AG04449 (cell line): ENCODE measurements at regions of chr15 and their contacts with region 1.

Region 1: DNA sequence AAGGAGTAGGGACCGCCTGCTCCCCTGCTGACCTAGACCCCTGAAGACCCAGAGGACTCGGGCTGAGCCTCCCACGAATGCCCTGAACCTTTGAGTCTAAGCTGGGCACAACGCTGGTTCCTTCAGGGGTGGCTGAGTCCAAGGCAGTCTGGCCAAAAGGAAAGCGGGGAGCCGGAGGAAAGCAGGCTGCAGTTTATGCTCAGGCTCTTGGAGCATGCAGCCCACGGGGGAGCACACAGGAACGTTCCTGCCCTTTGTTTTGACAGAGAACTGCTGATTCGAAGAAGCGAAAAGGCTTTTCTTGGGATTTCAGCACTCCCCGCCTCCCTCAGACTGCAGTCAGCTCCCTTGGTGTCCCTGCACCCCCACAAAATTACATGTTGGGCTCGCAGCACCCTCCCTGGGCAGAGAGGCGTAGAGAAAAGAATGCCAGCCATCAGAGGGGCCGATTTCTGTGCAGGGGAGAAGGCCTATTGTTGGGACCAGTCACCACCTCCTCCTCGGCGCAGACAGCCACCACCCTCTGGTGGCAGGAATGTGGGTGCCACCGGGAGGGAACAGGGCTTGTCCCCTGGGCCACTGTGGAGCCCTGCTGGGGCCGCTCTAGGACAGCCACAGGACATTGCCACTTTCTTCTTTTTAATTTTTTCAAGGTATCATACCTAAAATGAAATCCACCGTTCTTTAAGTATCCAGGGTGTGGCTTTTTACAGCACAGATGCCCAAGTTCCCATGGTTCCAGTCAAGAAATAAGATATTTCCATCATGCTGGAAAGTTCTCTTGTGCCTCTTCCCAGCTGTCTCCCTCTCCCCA is 72.2 kb downstream of the SMAD6 start:
- DNase-seq: no peak
- H3K4me3 ChIP-seq: no peak overlapping the region
- CTCF ChIP-seq: peak; percentile 99

Region 2: DNA sequence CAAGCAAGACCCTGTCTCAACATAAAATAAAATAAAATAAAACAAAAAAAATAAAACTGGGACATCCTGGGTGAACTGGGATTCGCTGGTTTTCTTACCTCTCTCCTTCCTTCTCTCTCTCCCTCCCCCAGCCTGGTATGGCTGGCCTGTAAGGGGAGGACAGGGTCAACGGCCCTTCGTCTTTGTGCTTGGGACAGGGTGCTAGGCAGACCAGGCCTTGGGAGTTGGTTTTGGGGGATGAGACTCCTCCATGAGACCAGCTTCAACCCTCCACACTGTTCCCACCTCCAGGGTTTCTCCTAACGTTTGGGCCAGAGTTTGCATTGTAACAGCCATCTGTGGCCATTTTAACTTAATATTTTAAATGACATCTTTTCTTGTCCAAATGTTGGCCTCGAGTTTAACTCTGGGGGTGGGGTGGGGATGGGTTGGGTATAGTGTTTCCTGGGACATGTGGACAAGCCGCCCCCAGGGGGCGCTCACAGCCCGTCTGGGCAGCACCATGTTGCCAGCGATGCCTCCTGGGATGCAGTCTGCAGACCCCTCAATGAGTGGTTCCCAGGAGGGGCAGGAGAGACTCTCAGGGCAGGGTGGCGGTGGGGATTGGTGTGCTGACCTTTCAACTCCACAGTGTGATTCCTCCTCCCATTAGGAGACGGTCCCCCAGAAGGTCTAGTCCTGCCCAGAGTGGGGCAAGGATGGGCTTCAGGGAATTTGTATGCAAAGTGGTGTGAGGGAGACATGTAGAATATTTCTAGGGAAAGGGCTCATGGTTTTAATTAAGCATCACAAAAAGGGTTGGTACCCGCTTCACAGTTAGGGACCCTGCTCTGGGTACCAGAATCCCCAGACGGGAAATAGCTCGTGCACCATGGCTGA is 170.7 kb before region 1 on chr15:
- CTCF ChIA-PET with region 1: interaction called, 32 read pairs
- POLR2A ChIA-PET with region 1: no interaction called
- DNase-seq: no peak
- H3K4me3 ChIP-seq: no peak overlapping the region
- CTCF ChIP-seq: peak; percentile 80

Region 3: GRCh38 chr15:66700802-66701421 is 73.3 kb before region 1 on chr15:
- CTCF ChIA-PET with region 1: interaction called, 28 read pairs
- POLR2A ChIA-PET with region 1: interaction called, 3 read pairs
- DNase-seq: peak; percentile 62
- H3K4me3 ChIP-seq: peak overlapping the region; percentile 69
- CTCF ChIP-seq: no peak

Region 4: GRCh38 chr15:66714543-66714981 is 59.6 kb before region 1 on chr15:
- CTCF ChIA-PET with region 1: interaction called, 18 read pairs
- POLR2A ChIA-PET with region 1: no interaction called
- DNase-seq: no peak
- H3K4me3 ChIP-seq: no peak overlapping the region; the same call in 1 of the 2 replicates
- CTCF ChIP-seq: no peak

Region 5: GRCh38 chr15:66720206-66721006 is 53.8 kb before region 1 on chr15:
- CTCF ChIA-PET with region 1: interaction called, 33 read pairs
- POLR2A ChIA-PET with region 1: no interaction called
- DNase-seq: no peak
- H3K4me3 ChIP-seq: no peak overlapping the region
- CTCF ChIP-seq: no peak

Region 6: DNA sequence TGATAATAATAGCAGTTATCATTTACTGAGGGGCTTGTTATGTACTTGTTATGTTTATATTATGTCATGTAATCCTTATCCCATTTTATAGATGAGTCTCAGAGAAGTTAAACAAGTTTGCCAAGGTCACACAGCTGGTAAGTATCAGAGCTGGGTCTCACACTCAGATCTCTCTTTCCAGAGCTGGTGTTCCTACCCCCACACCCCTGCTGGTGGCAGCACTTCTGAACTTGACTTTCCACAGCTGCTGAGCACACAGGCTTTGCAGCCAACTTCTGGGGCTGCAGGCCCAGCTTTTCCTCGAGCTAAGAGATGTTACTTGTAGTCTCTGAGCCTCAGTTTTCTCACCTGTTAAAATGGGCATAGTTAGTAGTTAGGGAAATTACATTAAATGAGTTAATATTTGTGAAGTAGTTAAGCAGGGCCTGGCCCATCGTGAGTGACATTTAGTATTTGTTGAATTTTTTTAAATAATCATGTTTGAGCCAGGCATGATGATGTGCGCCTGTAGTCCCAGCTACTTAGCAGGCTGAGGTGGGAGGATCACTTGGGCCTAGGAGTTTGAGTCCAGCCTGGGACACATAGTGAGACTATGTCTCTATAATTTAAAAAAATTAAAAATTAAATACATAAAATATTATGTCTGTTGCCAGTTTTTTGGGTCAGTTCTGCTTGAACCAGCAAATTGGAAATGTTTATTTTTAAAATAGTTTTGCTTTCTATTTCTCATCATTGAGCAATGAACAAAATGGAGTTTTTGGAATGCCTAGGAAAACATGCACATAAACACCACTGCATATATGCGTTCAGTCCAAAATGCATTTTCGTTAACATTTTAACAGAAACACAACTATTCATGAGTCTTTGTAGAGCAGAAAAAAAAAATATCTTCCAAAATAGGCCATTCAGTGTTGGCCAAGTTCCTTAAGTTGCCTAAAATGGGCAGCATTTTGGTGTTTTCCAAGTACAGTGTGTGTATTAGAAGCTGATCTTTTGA is 15.1 kb after region 1 on chr15:
- CTCF ChIA-PET with region 1: interaction called, 49 read pairs
- POLR2A ChIA-PET with region 1: no interaction called
- DNase-seq: no peak
- H3K4me3 ChIP-seq: no peak overlapping the region
- CTCF ChIP-seq: peak; percentile 65